Esophagus squamous epithelium (tissue), 5 donors: ENCODE measurements at regions of chr6 and their contacts with region 1.

Region 1: GRCh38 chr6:105409734-105410133 is 6.9 kb upstream of the PREP start:
- DNase-seq: no peak
- H3K4me3 ChIP-seq: no peak overlapping the region
- H3K27ac ChIP-seq: no peak overlapping the region
- H3K4me1 ChIP-seq: no peaks in the 10 kb centered on the region
- H3K27me3 ChIP-seq: peaks cover 0 to 10% (median 0%) of the 10 kb centered on the region in 4 donors
- CTCF ChIP-seq: no peak
- POLR2A ChIP-seq: no peak

Region 2: DNA sequence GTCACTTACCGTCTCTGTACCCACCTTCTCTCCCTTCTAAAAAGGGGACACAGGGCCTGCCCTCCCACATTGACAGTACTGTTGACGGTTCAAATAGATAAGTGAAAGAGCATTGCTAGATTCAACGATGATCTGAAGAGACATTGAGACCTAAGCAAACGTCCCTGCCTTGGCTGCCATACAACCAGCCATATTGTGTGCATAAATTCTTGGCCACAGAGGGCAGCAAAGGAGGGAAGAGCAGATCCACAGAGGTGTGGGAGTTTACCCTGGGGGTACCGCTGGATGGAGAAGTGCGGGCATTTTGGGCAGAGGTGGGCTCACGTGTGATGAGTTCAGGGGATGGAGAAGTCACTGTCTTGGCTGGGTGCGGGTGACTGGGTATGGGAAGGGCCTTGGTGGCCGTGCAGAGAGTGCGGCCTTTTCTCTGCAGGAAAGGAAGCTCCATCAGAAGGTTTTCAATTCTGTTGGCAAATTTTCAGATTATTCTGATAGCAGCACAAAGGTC is 315.5 kb before region 1 on chr6:
- intact Hi-C with region 1: loop called (anchors 5 kb)
- DNase-seq: no peak
- H3K4me3 ChIP-seq: no peak overlapping the region
- H3K27ac ChIP-seq: no peak overlapping the region
- H3K4me1 ChIP-seq: peaks cover 0 to 23% (median 0%) of the 10 kb centered on the region in 3 donors
- H3K27me3 ChIP-seq: no peaks in the 10 kb centered on the region
- CTCF ChIP-seq: no peak
- POLR2A ChIP-seq: no peak